ENCODE measurements at regions of chr18 and their contacts with region 1.

Region 1: DNA sequence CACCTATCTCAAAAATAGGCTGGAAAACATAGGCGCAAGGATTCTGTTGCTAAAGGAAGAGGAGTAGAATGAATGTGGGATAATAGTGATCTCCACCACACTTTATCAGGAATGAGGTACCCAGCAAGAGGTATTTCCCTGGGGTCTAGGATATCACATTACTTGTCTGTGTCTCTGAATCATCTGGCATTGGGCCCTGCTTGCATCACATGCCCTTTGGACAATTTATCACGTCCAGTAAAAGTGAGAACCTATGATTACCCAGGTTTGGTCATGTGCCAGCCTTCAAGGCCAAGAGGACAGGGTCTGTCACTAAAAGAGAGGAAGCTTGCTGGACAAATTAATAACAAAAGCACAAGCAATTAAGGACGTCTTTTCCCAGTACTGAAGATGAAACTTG is 11.4 kb upstream of the TRAPPC8 start:
- DNase-seq: no peak

Region 2: DNA sequence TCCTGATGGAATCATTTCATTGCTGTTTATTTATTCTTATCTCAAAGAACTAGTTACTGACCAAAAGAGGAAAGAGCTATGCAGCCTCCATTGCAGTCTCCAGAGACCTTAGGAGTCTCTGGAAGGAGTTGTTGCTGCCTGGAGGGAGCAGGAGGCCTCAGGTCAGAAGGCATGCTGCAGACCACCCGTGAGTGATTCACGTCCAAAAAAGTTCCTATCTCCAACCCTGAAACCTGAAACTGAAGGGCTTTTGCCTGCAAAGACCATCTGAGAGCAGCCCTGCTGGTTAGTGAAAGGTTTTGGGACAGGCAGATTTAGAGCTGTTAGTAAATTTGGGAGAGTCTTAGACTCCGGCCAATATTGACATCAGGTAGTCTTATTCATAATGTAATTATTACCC is 222.7 kb before region 1 on chr18:
- intact Hi-C with region 1: loop called (anchors 5 kb)
- DNase-seq: no peak

Region 3: DNA sequence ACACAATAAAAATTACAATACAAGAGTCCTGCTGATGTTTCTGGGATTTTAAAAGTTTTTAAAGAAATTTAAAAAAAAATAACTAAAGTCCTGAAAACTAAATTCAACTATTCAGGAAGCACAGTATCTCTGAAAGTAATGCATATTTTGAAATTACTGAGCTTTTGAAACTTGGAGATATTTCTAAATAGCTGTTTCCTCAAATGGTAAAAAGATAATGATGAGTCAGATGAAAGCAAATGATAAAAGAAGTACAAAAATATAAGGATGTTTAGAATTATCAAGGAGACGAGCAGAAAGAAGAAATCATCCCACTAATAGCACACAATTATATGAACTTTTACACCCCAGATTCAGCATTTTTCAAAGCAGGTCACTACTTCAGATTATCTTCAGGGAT is 103.5 kb before region 1 on chr18:
- intact Hi-C with region 1: no loop called
- DNase-seq: no peak

Region 4: GRCh38 chr18:31920277-31920676 is 34.1 kb before region 1 on chr18:
- intact Hi-C with region 1: no loop called
- DNase-seq: no peak